Activated CD8-positive, alpha-beta T cell treated with anti-CD3 and anti-CD28 coated beads, Interleukin-2, amount 10 ng/mL, durations not matched to agents 7 days and 5 days (primary cell): ENCODE measurements at regions of chr6 and their contacts with region 1.

Region 1: GRCh38 chr6:32984605-32985389 is 16.4 kb downstream of the BRD2 start:
- DNase-seq: peak; percentile 93
- ATAC-seq: peak; percentile 78
- H3K4me3 Mint-ChIP-seq: no peak overlapping the region
- H3K27ac Mint-ChIP-seq: peak overlapping the region; percentile 58
- H3K4me1 Mint-ChIP-seq: peaks cover 25% of the 10 kb centered on the region
- H3K27me3 Mint-ChIP-seq: peaks cover 3% of the 10 kb centered on the region

Region 2: GRCh38 chr6:32843979-32844838 is 140.6 kb before region 1 on chr6 and contains the start of gene PSMB8:
- CTCF ChIA-PET with region 1: interaction called, 63 read pairs
- POLR2A ChIA-PET with region 1: interaction called, 4 read pairs
- DNase-seq: peak; percentile 99
- ATAC-seq: peak; percentile 70
- H3K4me3 Mint-ChIP-seq: peak within 1 kb of the TSS; percentile 98
- H3K27ac Mint-ChIP-seq: peak within 1 kb of the TSS; percentile 99
- H3K4me1 Mint-ChIP-seq: peaks cover 71% of the 10 kb centered on the region
- H3K27me3 Mint-ChIP-seq: no peaks in the 10 kb centered on the region
- total RNA-seq, gene PSMB8: 385 to 397 TPM

Region 3: GRCh38 chr6:32879691-32880090 is 105.1 kb before region 1 on chr6:
- CTCF ChIA-PET with region 1: interaction called, 133 read pairs
- POLR2A ChIA-PET with region 1: no interaction called
- DNase-seq: no peak
- ATAC-seq: no peak
- H3K4me3 Mint-ChIP-seq: no peak overlapping the region
- H3K27ac Mint-ChIP-seq: no peak overlapping the region
- H3K4me1 Mint-ChIP-seq: no peaks in the 10 kb centered on the region
- H3K27me3 Mint-ChIP-seq: no peaks in the 10 kb centered on the region

Region 4: GRCh38 chr6:32906539-32906938 is 78.3 kb before region 1 on chr6:
- CTCF ChIA-PET with region 1: interaction called, 13 read pairs
- POLR2A ChIA-PET with region 1: no interaction called
- DNase-seq: no peak
- ATAC-seq: no peak
- H3K4me3 Mint-ChIP-seq: no peak overlapping the region
- H3K27ac Mint-ChIP-seq: no peak overlapping the region
- H3K4me1 Mint-ChIP-seq: no peaks in the 10 kb centered on the region
- H3K27me3 Mint-ChIP-seq: peaks cover 8% of the 10 kb centered on the region

Region 5: GRCh38 chr6:32940656-32941213 is 44.1 kb before region 1 on chr6 and contains the start of gene HLA-DMB:
- CTCF ChIA-PET with region 1: interaction called, 205 read pairs
- POLR2A ChIA-PET with region 1: interaction called, 5 read pairs
- DNase-seq: peak; percentile 73
- ATAC-seq: peak; percentile 90
- H3K4me3 Mint-ChIP-seq: peak within 1 kb of the TSS; percentile 86
- H3K27ac Mint-ChIP-seq: peak within 1 kb of the TSS; percentile 97
- H3K4me1 Mint-ChIP-seq: peaks cover 69% of the 10 kb centered on the region
- H3K27me3 Mint-ChIP-seq: no peaks in the 10 kb centered on the region
- total RNA-seq, gene HLA-DMB: 14.4 to 14.7 TPM

Region 6: DNA sequence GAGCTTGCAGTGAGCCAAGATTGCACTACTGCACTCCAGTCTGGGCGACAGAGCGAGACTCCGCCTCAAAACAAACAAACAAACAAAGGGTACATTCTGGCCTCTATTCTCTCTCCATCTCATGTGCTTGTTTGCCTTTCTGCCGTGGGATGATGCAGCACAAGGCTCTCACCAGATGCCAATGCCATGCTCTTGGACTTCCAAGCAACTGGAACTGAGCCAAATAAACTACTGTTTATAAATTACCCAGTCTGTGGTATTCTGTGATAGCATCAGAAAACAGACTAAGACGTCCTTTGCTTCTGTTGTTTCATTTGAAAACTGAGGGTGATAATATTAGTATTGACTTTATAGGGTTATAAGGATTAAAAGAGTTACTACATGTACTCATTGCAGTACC is 20.0 kb before region 1 on chr6:
- CTCF ChIA-PET with region 1: interaction called, 240 read pairs
- POLR2A ChIA-PET with region 1: interaction called, 263 read pairs
- DNase-seq: no peak
- ATAC-seq: no peak
- H3K4me3 Mint-ChIP-seq: no peak overlapping the region
- H3K27ac Mint-ChIP-seq: no peak overlapping the region
- H3K4me1 Mint-ChIP-seq: peaks cover 37% of the 10 kb centered on the region
- H3K27me3 Mint-ChIP-seq: no peaks in the 10 kb centered on the region

Region 7: DNA sequence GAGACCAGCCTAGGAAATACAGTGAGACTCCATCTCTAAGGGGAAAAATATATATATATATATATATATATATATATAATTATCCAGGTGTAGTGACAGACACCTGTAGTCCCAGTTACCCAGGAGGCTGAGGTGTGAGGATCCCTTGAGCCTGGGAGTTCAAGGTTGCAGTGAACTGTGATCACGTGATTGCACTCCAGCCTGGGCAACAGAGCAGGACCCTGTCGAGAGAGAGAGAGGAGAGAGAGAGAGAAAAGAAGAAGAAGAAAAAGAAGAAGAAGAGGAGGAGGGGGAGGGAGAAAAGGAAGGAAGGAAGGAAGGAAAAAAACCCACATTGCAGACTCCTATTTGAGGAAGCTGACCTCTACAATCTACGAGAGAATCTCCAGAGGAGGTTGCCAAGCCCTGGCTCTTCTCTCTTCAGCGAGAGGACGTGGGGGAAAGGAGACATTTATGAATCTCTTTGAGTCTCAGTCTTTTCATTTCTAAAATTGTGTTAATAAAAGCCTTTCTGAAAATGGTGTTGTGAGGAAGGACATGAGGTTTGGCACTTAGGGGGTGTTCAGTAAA is 157.8 kb after region 1 on chr6:
- CTCF ChIA-PET with region 1: no interaction called
- POLR2A ChIA-PET with region 1: no interaction called
- DNase-seq: no peak
- ATAC-seq: no peak
- H3K4me3 Mint-ChIP-seq: no peak overlapping the region
- H3K27ac Mint-ChIP-seq: no peak overlapping the region
- H3K4me1 Mint-ChIP-seq: peaks cover 10% of the 10 kb centered on the region
- H3K27me3 Mint-ChIP-seq: peaks cover 25% of the 10 kb centered on the region

Region 8: DNA sequence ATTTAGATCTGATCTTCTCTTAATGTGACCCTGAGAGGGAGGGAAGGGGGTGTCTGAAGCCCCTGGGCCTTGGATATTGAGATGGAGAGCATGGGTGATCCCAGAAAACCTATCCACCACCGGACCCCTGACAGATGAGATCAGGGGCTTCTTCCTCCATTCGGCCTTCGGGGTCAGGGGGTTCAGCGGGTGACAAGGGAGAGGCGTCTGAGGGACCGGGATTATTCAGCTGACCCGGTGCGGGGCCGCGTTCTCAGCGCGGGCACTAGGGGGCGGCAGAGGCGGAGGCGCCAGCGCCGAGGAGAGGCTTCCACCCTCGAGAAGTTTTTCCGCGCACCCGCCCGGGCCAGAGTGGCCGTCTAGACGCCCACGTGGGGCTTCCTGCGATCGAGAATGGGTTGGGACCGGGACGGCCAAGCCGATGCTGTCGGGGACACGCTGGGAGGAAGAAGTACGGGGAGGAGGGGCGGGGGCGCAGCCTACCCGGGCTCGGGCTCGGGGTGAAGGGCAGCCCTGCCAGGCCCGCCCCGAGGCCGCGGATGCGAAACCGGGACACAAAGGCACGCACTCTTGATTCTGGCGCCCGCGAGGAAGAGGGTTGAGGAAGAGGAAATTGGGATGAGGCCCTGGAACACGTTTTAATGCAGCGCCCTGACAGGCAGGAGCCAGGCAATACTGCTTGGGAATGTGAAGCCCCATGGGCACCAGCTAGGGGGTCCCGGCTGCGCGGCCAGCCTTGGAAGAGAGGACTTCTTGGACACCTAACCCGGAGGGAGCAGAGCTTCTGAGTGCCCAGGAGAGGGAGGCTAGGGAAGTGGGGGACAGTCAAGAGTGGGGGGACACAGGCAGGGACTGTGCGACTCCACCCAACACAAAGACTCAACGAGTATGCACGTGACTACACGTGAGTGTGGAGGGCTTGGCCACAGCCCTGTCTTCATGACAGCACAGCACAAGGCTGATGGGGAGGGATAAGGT is 176.8 kb after region 1 on chr6:
- CTCF ChIA-PET with region 1: no interaction called
- POLR2A ChIA-PET with region 1: no interaction called
- DNase-seq: peak; percentile 87
- ATAC-seq: peak; percentile 98
- H3K4me3 Mint-ChIP-seq: peak overlapping the region; percentile 80
- H3K27ac Mint-ChIP-seq: peak overlapping the region; percentile 89
- H3K4me1 Mint-ChIP-seq: peaks cover 20% of the 10 kb centered on the region
- H3K27me3 Mint-ChIP-seq: peaks cover 3% of the 10 kb centered on the region